Astrocyte of the cerebellum (primary cell): ENCODE measurements at regions of chrX and their contacts with region 1.

Region 1: GRCh38 chrX:20001588-20001987 is 10.7 kb upstream of the BCLAF3 start:
- DNase-seq: no peak
- H3K4me3 ChIP-seq: no peak overlapping the region
- CTCF ChIP-seq: no peak

Region 2: GRCh38 chrX:20080277-20080676 is 78.7 kb after region 1 on chrX:
- in situ Hi-C with region 1: loop called (anchors 5 kb)
- DNase-seq: no peak
- H3K4me3 ChIP-seq: no peak overlapping the region
- CTCF ChIP-seq: no peak